OCI-LY7 (cell line): ENCODE measurements at regions of chr7 and their contacts with region 1.

Region 1: GRCh38 chr7:94042381-94042780 is 38.2 kb upstream of the BET1 start:
- DNase-seq: peak; percentile 50
- H3K4me3 ChIP-seq: no peak overlapping the region
- H3K27ac ChIP-seq: no peak overlapping the region
- H3K4me1 ChIP-seq: peaks cover 53% of the 10 kb centered on the region
- CTCF ChIP-seq: no peak

Region 2: GRCh38 chr7:94031865-94032264 is 10.5 kb before region 1 on chr7:
- CTCF ChIA-PET with region 1: no interaction called
- POLR2A ChIA-PET with region 1: interaction called, 14 read pairs
- intact Hi-C with region 1: no loop called
- DNase-seq: no peak
- H3K4me3 ChIP-seq: no peak overlapping the region
- H3K27ac ChIP-seq: no peak overlapping the region
- H3K4me1 ChIP-seq: peaks cover 22% of the 10 kb centered on the region
- CTCF ChIP-seq: no peak